ENCODE measurements at regions of chr2 and their contacts with region 1.

Region 1: GRCh38 chr2:162256591-162256991 is 13.3 kb upstream of the FAP start:
- DNase-seq: no peak
- H3K4me3 Mint-ChIP-seq: no peak overlapping the region
- H3K27ac Mint-ChIP-seq: no peak overlapping the region
- H3K4me1 Mint-ChIP-seq: peaks cover 11% of the 10 kb centered on the region
- H3K27me3 Mint-ChIP-seq: peaks cover 22% of the 10 kb centered on the region

Region 2: GRCh38 chr2:162277381-162277780 is 20.8 kb after region 1 on chr2:
- intact Hi-C with region 1: loop called (anchors 2 kb)
- DNase-seq: no peak
- H3K4me3 Mint-ChIP-seq: no peak overlapping the region
- H3K27ac Mint-ChIP-seq: no peak overlapping the region
- H3K4me1 Mint-ChIP-seq: peaks cover 7% of the 10 kb centered on the region
- H3K27me3 Mint-ChIP-seq: no peaks in the 10 kb centered on the region

Region 3: GRCh38 chr2:162327134-162327769 is 70.7 kb after region 1 on chr2:
- intact Hi-C with region 1: no loop called
- DNase-seq: no peak
- H3K4me3 Mint-ChIP-seq: no peak overlapping the region
- H3K27ac Mint-ChIP-seq: no peak overlapping the region
- H3K4me1 Mint-ChIP-seq: peaks cover 2% of the 10 kb centered on the region
- H3K27me3 Mint-ChIP-seq: no peaks in the 10 kb centered on the region

Measured in activated T-helper 2 cell treated with anti-CD3 and anti-CD28 coated beads, Interferon-gamma antibody, Interleukin-2, Interleukin-4, amounts not matched to agents 10 μg/mL and 5 μg/mL and 100 μg/mL, durations not matched to agents 14 hours and 24 hours and 36 hours (primary cell).